ENCODE measurements at regions of chr2 and their contacts with region 1.

Region 1: DNA sequence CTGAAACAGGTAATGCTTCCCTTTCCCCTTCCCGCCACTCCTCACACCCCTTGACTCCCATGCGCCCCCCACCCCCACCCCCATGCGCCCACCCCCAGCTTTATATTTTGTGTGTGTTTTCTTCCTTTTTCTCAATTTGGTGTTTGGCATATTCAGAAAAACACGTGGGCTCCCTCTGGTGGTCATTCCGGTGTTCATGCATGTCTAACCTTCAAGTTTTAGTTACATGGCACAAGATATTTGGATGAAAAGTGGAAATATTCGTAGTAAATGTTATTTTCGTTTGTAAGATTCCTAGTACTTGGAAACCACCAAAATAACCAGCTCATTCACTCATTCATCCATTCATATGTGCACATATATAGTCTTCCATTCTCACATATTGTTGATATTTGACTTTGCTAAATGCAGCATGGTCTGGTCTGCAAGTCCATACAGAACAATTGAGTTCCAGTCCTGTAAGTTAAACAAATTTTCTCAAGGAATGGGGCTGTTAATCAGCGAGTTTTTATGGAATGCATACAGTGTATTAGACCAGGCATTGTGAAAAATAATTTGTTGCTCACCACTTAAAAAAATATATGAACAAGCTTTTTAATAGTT is 143.6 kb upstream of the MAP3K20 start:
- DNase-seq: peak; percentile 88
- ATAC-seq: peak; percentile 58

Region 2: DNA sequence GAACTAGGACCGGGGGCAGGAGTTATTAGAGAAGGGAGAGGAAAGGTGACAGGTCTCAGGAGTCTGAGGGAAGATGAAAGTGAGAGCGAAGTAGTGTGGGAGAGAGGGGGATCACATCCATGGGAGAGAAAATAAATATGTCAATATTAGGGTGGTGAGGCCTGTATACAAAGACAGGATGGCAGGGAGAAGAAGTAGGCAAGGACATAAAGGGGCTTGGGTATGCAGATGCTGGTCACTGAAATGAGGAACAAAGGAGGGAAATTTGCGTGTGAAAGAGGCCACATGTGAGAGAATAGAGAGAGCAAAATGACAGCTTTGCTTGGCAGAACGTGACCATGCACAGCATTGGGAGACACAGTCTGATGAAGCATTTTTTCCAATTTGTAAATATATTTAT is 918.6 kb before region 1 on chr2:
- intact Hi-C with region 1: no loop called
- DNase-seq: no peak
- ATAC-seq: no peak

Region 3: GRCh38 chr2:172813314-172813888 is 118.6 kb before region 1 on chr2:
- intact Hi-C with region 1: loop called (anchors 10 kb)
- DNase-seq: no peak
- ATAC-seq: peak; percentile 74

Region 4: DNA sequence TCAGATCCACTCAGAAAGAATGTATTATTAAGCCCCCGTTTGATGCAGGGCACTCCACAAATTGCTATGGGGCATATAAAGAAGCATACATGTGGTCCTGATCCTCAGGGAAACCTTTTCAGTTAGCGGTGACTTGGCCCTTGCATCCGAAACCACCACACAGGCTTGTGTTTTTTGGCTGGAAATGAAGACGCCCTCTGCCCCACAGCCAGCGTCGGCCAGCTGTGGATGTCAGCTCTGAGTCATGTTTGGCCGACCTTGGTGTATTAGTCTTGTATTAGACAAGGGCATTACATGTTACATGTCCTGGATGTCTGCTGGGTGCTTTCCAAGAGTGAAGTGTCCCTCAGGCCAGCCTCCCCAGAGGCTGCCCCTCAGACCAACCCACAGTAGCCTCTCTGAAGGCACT is 36.0 kb after region 1 on chr2:
- intact Hi-C with region 1: no loop called
- DNase-seq: peak; percentile 63
- ATAC-seq: peak; percentile 94

Region 5: GRCh38 chr2:173059927-173060565 is 128.0 kb after region 1 on chr2:
- intact Hi-C with region 1: no loop called
- DNase-seq: no peak
- ATAC-seq: peak; percentile 66

Measured in sciatic nerve (tissue), 2 donors.